A549 (cell line): ENCODE measurements at regions of chr2 and their contacts with region 1.

Region 1: DNA sequence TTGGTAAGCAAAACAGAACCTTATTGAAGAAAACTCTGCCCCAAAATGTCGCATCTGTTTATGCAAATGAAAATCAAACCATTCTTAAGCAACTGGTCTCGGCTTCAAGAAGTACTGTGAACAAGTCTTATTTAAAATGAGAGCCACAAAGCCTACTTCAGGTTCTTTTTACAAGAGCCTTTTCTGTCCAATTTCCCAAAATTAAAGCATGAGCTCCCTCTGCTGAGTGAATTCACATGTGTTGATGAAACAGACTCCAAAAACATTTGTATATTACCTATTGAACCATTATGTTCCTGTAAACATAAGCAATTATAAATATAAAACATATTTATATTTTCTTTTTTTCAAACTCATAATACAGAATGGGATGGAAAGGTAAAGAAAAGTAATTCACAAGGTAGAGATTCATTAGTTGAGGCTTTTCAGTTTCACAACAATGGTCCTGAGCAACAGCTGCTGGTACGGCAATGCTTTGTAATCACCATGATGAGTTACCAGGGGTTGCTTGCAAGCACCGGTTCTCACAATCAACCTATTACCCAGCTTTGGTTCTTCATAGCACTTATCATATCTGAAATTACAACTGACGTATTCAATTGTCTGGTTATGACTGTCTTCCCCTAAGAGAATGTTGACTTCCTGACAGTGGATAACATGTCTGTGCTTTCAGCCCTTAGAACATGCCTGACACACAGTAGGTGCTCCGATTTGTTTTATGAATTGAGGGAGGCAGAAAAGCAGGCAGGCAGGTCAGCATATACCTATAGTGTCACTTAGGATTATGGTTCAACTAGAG is 108.4 kb upstream of the BZW1 start:
- DNase-seq: peak; percentile 15 to 74
- ATAC-seq: peak; percentile 40 to 84; a peak in 4 of 6 replicates
- H3K4me3 ChIP-seq: no peak overlapping the region
- H3K27ac ChIP-seq: peak overlapping the region; percentile 17 to 57; a peak in 4 of 6 replicates
- H3K4me1 ChIP-seq: peaks cover 6% of the 10 kb centered on the region
- CTCF ChIP-seq: peak; percentile 92
- EP300 ChIP-seq: no peak
- POLR2A ChIP-seq: no peak
- RAD21 ChIP-seq: peak; percentile 91 to 96

Region 2: GRCh38 chr2:199979832-199980628 is 723.3 kb before region 1 on chr2:
- CTCF ChIA-PET with region 1: interaction called, 12 read pairs
- POLR2A ChIA-PET with region 1: no interaction called
- DNase-seq: peak; percentile 41 to 66
- ATAC-seq: peak; percentile 62 to 81; a peak in 5 of 6 replicates
- H3K4me3 ChIP-seq: no peak overlapping the region
- H3K27ac ChIP-seq: peak overlapping the region; percentile 72
- H3K4me1 ChIP-seq: peaks cover 39% of the 10 kb centered on the region
- CTCF ChIP-seq: peak; percentile 94
- EP300 ChIP-seq: no peak
- POLR2A ChIP-seq: no peak
- RAD21 ChIP-seq: peak; percentile 93 to 97

Region 3: GRCh38 chr2:200509612-200510433 is 193.5 kb before region 1 on chr2 and contains the start of gene KCTD18:
- CTCF ChIA-PET with region 1: interaction called, 17 read pairs
- POLR2A ChIA-PET with region 1: interaction called, 6 read pairs
- DNase-seq: peak; percentile 85 to 87
- ATAC-seq: peak; percentile 97 to 98
- H3K4me3 ChIP-seq: peak within 1 kb of the TSS; percentile 59
- H3K27ac ChIP-seq: peak within 1 kb of the TSS; percentile 87 to 99
- H3K4me1 ChIP-seq: peaks cover 21% of the 10 kb centered on the region
- CTCF ChIP-seq: peak; percentile 78
- EP300 ChIP-seq: no peak
- POLR2A ChIP-seq: peak; percentile 56
- RAD21 ChIP-seq: peak; percentile 48 to 71
- polyA plus RNA-seq, gene KCTD18: 15.3 and 21.3 TPM in 2 replicates

Region 4: GRCh38 chr2:200585730-200586643 is 117.3 kb before region 1 on chr2 and contains the start of gene AOX1:
- CTCF ChIA-PET with region 1: interaction called, 10 read pairs
- POLR2A ChIA-PET with region 1: no interaction called
- DNase-seq: no peak
- ATAC-seq: peak in 1 of 2 experiments; percentile 35; a peak in 3 of 6 replicates
- H3K4me3 ChIP-seq: no peak within 1 kb of the TSS
- H3K27ac ChIP-seq: no peak within 1 kb of the TSS
- H3K4me1 ChIP-seq: peaks cover 10% of the 10 kb centered on the region; the same call in 1 of the 3 replicates
- CTCF ChIP-seq: no peak
- EP300 ChIP-seq: no peak
- POLR2A ChIP-seq: no peak
- RAD21 ChIP-seq: no peak
- polyA plus RNA-seq, gene AOX1: 2.8 and 3.6 TPM in 2 replicates

Region 5: DNA sequence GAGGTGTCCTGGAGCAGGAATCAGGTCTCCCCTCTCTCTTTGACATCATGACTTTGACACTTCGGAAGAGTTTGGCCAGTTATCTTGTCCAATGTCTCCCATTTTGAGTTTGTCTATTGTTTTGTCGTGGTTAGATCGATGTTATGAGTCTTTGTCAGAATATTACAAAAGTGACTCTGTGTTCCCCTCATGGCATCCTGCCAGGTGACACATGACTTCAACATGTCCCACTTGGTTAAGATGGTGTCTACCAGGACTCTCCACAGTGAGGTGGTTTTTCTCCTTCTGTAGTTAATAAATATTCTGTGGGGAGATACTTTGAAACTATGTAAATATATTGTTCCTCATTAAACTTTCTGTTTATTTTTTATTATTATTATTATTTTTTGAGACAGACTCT is 31.7 kb after region 1 on chr2:
- CTCF ChIA-PET with region 1: interaction called, 35 read pairs
- POLR2A ChIA-PET with region 1: no interaction called
- DNase-seq: no peak
- ATAC-seq: no peak
- H3K4me3 ChIP-seq: no peak overlapping the region
- H3K27ac ChIP-seq: peak overlapping the region in 1 of 2 experiments; percentile 36; a peak in 1 of 6 replicates
- H3K4me1 ChIP-seq: peaks cover 4% of the 10 kb centered on the region; the same call in 1 of the 3 replicates
- CTCF ChIP-seq: no peak
- EP300 ChIP-seq: no peak
- POLR2A ChIP-seq: no peak
- RAD21 ChIP-seq: no peak